Heart left ventricle (tissue), 16 donors: ENCODE measurements at regions of chr5 and their contacts with region 1.

Region 1: GRCh38 chr5:81751009-81751835 is at the start of gene SSBP2:
- DNase-seq: peak; percentile 99 to 100 (median 99)
- ATAC-seq: peak; percentile 95 to 99 (median 98)
- H3K4me3 ChIP-seq: peak within 1 kb of the TSS; percentile 76 to 98 (median 82)
- H3K27ac ChIP-seq: peak within 1 kb of the TSS; percentile 94 to 100 (median 99)
- H3K4me1 ChIP-seq: peaks cover under 1 to 48% (median 29%) of the 10 kb centered on the region in 12 donors
- H3K27me3 ChIP-seq: no peaks in the 10 kb centered on the region
- CTCF ChIP-seq: peak in 1 of 12 donors; percentile 22
- POLR2A ChIP-seq: peak in 1 of 2 donors; percentile 72
- total RNA-seq, gene SSBP2: 38.6 to 98.1 (median 50.7) TPM

Region 2: DNA sequence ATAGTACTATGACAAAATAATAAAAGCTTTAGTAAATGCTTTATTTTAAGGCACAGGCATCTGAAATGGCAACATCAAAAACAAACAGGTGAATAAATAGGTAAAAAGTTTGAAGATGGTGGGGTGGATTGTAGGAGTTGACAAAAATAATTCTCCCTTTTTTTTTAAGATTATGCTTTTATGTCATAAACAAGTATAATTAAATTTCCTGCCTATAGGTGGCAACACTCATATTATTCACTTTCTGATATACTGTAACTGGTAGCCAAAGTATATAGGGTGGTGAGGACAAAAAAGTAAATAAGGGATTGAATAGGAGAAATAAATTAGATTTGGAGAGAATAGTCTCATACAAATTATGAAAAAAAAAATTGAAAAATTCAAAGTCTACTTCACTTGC is 237.2 kb before region 1 on chr5:
- intact Hi-C with region 1: loop called in 7 of 10 experiments (anchors 5 kb)
- DNase-seq: no peak
- ATAC-seq: no peak
- H3K4me3 ChIP-seq: no peak overlapping the region
- H3K27ac ChIP-seq: no peak overlapping the region
- H3K4me1 ChIP-seq: no peaks in the 10 kb centered on the region
- H3K27me3 ChIP-seq: no peaks in the 10 kb centered on the region
- CTCF ChIP-seq: peak in 7 of 12 donors; percentile 13 to 37 (median 22)
- POLR2A ChIP-seq: no peak

Region 3: DNA sequence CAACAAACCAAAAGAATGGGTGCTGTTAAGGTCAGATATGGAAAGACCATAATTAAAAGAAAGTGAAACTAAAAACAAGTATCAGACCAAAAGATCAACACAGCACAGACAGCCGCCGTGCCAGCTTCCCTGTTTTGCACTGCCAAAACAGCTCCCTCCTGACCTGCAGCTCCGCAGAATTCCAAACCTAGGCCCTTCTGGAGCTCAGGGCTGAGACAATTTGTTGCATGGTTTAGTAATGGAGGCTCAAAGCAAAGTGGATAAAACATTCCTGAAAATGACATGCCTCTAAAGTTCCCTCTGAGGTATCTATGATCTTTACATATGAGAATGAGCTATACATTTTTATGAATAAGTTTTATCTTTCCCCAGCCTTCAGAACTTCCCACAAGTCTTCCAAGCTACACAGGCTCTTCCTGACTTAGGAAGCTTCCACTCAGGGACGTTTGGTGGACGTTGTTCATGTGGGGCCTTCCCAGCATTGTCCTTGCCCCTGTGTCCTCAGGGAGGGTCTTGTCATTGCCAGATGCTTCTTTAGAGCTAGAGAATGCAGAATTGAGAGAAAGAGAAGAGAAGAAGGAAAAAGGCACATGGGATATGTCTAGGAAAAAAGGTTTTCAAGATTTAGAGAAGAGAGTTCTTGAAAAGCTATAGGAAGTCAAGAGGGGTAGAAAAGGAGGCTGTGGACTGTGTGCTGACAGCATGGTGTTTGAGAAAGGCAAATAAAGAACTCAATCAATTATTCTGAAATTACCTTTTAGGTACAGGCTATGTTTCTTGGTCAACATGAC is 28.1 kb after region 1 on chr5:
- intact Hi-C with region 1: loop called in 2 of 10 experiments (anchors 2 kb)
- DNase-seq: peak; percentile 58 to 81 (median 60)
- ATAC-seq: peak; percentile 68 to 88 (median 75)
- H3K4me3 ChIP-seq: peak overlapping the region in 10 of 12 donors; percentile 2 to 47 (median 31)
- H3K27ac ChIP-seq: peak overlapping the region; percentile 43 to 88 (median 71)
- H3K4me1 ChIP-seq: peaks cover 0 to 26% (median 16%) of the 10 kb centered on the region in 12 donors
- H3K27me3 ChIP-seq: no peaks in the 10 kb centered on the region
- CTCF ChIP-seq: no peak
- POLR2A ChIP-seq: no peak

Region 4: GRCh38 chr5:81851481-81852178 is 100.4 kb after region 1 on chr5:
- intact Hi-C with region 1: loop called (anchors 1 to 2 kb)
- DNase-seq: peak; percentile 96 to 98 (median 97)
- ATAC-seq: peak; percentile 93 to 96 (median 94)
- H3K4me3 ChIP-seq: peak overlapping the region in 11 of 12 donors; percentile 23 to 71 (median 56)
- H3K27ac ChIP-seq: peak overlapping the region; percentile 80 to 99 (median 92)
- H3K4me1 ChIP-seq: peaks cover 0 to 79% (median 47%) of the 10 kb centered on the region in 12 donors
- H3K27me3 ChIP-seq: no peaks in the 10 kb centered on the region
- CTCF ChIP-seq: no peak
- POLR2A ChIP-seq: peak in 1 of 2 donors; percentile 58

Region 5: DNA sequence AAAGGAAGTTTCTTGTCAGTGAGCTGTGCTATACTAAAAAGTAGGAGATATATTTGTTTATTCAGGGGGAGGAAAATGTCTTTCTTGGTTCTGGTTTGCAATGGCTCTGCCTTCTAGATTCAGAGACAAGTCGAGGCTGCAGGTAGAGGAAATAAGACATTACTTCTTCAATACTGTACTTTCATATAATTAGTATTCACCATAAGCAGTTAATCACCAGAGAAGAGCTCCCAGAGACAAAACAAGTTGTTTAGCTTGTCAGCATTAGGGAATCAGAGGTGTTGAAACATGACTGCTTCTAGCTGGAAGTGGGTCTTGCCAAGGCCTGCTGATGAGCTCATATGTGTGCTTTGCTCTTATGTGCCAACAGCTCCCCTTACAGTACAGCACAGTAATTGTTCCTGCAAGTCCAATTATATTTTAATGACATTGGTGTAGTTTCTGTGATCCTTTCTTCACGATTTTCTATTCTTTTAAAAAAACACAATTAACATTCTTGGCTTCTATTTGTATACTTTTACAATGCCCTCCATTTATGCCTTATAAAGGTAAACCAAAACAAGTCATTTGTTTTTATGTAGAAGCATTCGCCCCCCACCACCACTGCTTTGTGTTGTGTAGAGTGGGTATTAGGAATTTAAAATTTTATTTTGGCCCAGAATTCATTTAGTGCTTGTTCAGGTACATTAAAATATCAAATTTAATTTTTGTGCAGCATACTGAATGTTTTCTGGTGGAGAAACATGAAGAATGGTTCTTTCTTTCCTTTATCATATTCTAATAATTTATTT is 414.7 kb after region 1 on chr5:
- intact Hi-C with region 1: loop called in 5 of 10 experiments (anchors 2 to 10 kb)
- DNase-seq: peak in 4 of 5 donors; percentile 64 to 81 (median 78)
- ATAC-seq: peak; percentile 98 to 100 (median 100)
- H3K4me3 ChIP-seq: no peak overlapping the region
- H3K27ac ChIP-seq: peak overlapping the region in 10 of 12 donors; percentile 5 to 55 (median 38)
- H3K4me1 ChIP-seq: peaks cover 0 to 26% (median 12%) of the 10 kb centered on the region in 12 donors
- H3K27me3 ChIP-seq: no peaks in the 10 kb centered on the region
- CTCF ChIP-seq: peak; percentile 53 to 87 (median 76)
- POLR2A ChIP-seq: no peak